Activated CD4-positive, alpha-beta T cell treated with anti-CD3 and anti-CD28 coated beads for 36 hours (primary cell): ENCODE measurements at regions of chr21 and their contacts with region 1.

Region 1: DNA sequence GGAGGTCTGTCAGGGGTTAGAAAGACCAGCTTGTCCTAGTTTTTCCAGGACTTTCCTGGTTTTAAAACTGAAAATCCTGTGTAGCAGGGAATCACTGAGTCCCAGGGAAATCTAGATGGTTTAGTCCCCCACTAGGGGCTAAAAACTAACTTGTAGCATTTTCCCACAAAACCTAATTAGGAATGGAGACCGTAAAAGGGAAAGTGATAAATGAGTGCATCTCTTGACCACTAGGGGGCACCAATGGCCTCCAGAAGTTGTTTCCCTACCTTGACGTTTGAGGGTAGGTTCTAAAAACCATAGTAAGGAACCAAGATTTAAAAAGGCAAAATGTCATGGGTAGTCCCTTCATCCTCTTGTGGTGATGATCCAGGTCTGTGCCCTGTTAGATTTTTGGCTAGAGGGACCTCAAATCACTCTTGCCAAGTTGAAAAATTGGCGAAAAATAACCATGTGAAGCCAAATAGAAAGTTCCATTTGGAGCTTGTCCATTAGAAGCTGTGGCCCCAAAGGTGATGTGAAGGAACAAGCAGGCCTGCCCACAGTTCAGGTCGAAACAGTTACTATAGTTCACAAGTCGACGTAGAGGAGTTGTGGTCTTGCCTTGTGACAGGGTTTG is 24.5 kb downstream of the CLIC6 start:
- DNase-seq: peak; percentile 71
- ATAC-seq: peak; percentile 60
- H3K4me3 Mint-ChIP-seq: no peak overlapping the region
- H3K27ac Mint-ChIP-seq: no peak overlapping the region
- H3K4me1 Mint-ChIP-seq: peaks cover 2% of the 10 kb centered on the region
- H3K27me3 Mint-ChIP-seq: peaks cover 13% of the 10 kb centered on the region

Region 2: DNA sequence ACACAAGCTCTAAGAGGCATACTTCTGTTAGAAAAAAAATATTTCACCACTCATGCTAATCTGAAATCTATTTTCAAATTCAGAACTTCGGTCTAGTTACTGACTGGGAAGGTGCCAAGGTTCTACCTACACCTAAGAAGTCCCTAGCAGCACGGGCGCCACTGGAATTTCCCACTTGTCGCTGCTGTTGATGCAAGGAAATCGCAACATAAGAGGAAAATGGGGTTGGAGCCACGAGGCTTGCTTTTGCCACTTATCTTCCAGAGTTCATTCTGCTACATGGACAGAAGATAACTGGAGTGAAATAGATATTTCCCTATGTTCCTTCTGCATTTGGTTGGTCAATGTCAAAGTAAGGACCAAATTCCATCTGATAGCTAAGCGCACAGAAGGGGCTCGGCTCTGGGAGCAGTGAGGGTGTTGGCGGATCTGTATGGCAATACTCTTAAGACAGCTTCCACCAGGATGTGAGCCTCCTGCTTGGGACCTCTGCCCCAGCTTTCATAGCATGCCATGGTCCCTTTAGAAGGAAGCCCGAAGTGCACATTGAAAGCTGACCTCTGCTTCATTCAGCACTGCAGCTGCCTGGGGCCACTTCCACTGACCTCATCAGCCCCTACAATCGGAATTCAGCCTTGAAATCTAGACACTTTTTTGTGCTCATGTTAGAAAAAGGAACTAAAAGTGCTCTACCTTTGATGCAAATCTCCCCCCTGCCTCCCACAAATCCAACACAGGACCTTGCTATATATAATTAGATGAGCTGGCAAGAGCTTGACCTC is 125.5 kb before region 1 on chr21:
- CTCF ChIA-PET with region 1: no interaction called
- POLR2A ChIA-PET with region 1: no interaction called
- intact Hi-C with region 1: no loop called
- DNase-seq: no peak
- ATAC-seq: no peak
- H3K4me3 Mint-ChIP-seq: no peak overlapping the region
- H3K27ac Mint-ChIP-seq: no peak overlapping the region
- H3K4me1 Mint-ChIP-seq: no peaks in the 10 kb centered on the region
- H3K27me3 Mint-ChIP-seq: no peaks in the 10 kb centered on the region

Region 3: DNA sequence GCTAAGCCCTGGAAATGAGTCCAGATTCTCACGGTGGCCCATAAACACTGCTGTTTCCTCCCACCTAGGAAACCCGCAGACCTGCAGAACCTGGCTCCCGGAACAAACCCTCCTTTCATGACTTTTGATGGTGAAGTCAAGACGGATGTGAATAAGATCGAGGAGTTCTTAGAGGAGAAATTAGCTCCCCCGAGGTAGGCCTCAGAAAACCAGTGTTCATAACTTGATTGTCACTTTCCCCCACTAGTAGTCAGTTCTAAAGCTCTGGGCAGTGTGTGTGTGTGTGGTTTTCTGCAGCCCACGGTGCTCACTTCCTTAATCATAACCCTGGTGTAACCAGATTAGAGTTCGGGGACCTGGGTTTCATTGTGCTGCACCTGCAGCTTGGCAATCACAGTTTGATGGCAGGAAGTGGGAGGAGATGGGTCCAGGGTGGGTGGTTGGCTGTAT is 14.6 kb after region 1 on chr21:
- CTCF ChIA-PET with region 1: interaction called, 20 read pairs
- POLR2A ChIA-PET with region 1: no interaction called
- intact Hi-C with region 1: no loop called
- DNase-seq: peak; percentile 83
- ATAC-seq: peak; percentile 94
- H3K4me3 Mint-ChIP-seq: no peak overlapping the region
- H3K27ac Mint-ChIP-seq: peak overlapping the region; percentile 49
- H3K4me1 Mint-ChIP-seq: peaks cover 26% of the 10 kb centered on the region
- H3K27me3 Mint-ChIP-seq: peaks cover 16% of the 10 kb centered on the region

Region 4: DNA sequence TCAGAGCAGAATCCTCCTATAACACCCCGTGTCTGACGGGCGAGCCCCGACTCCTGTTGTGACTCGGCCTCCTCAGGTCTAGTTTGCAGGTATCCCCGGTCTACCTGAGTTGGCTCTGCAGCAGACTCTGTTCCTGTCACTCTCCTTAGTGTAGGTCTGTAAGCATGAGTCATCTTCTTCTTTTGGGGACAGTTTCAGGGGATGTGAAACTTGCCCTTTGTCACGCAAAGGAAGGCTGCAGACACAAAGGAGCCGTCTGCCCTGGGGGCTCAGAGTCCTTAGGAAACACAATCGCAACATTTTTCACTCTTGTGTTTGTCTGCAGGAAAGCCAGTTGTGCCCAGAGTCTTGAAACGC is 172.6 kb after region 1 on chr21:
- CTCF ChIA-PET with region 1: no interaction called
- POLR2A ChIA-PET with region 1: no interaction called
- intact Hi-C with region 1: loop called in 1 of 2 experiments (anchors 5 kb)
- DNase-seq: peak; percentile 69
- ATAC-seq: peak; percentile 91
- H3K4me3 Mint-ChIP-seq: peak overlapping the region; percentile 43
- H3K27ac Mint-ChIP-seq: peak overlapping the region; percentile 76
- H3K4me1 Mint-ChIP-seq: peaks cover 69% of the 10 kb centered on the region
- H3K27me3 Mint-ChIP-seq: no peaks in the 10 kb centered on the region

Region 5: GRCh38 chr21:35622612-35623011 is 929.3 kb after region 1 on chr21:
- CTCF ChIA-PET with region 1: interaction called, 3 read pairs
- POLR2A ChIA-PET with region 1: no interaction called
- intact Hi-C with region 1: loop called in 1 of 2 experiments (anchors 5 kb)
- DNase-seq: no peak
- ATAC-seq: no peak
- H3K4me3 Mint-ChIP-seq: no peak overlapping the region
- H3K27ac Mint-ChIP-seq: no peak overlapping the region
- H3K4me1 Mint-ChIP-seq: peaks cover 3% of the 10 kb centered on the region
- H3K27me3 Mint-ChIP-seq: peaks cover 13% of the 10 kb centered on the region

Region 6: DNA sequence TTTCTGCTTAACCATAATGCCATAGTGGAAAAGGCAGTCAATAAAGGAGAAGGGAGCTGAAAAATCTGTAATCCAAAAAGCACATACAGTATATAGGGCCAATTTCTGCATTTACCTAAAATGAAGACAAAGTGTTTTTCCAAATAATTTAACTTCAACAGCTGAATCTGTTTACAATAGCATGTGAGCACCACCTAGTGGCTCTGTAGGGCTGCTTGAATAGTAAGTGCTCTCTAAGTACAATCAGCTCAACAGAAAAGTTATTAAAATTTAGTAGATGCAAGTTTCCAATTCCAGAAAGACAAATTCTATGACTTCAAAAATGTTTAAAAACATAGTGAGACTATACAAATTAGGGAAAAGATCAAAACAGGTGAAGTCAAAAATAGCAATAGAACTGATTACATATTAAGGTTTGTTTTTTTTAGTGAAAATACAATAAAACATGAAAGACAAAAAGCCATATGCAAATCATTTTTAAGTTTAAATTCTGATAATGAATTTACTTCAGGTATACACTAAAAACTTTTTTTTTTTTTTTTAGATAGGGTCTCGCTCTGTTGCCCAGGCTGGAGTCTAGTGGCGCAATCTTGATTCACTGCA is 1147.0 kb after region 1 on chr21:
- CTCF ChIA-PET with region 1: interaction called, 13 read pairs
- POLR2A ChIA-PET with region 1: no interaction called
- intact Hi-C with region 1: loop called (anchors 1 kb)
- DNase-seq: peak; percentile 73
- ATAC-seq: no peak
- H3K4me3 Mint-ChIP-seq: no peak overlapping the region
- H3K27ac Mint-ChIP-seq: no peak overlapping the region
- H3K4me1 Mint-ChIP-seq: peaks cover 2% of the 10 kb centered on the region
- H3K27me3 Mint-ChIP-seq: no peaks in the 10 kb centered on the region

Region 7: GRCh38 chr21:36028127-36029069 is 1335.1 kb after region 1 on chr21:
- CTCF ChIA-PET with region 1: interaction called, 5 read pairs
- POLR2A ChIA-PET with region 1: no interaction called
- intact Hi-C with region 1: loop called in 1 of 2 experiments (anchors 2 kb)
- DNase-seq: peak; percentile 77
- ATAC-seq: peak; percentile 93
- H3K4me3 Mint-ChIP-seq: no peak overlapping the region
- H3K27ac Mint-ChIP-seq: no peak overlapping the region
- H3K4me1 Mint-ChIP-seq: peaks cover 5% of the 10 kb centered on the region
- H3K27me3 Mint-ChIP-seq: no peaks in the 10 kb centered on the region